ENCODE measurements at regions of chr20 and their contacts with region 1.

Region 1: GRCh38 chr20:13261460-13262301 is 40.6 kb downstream of the ISM1 start:
- DNase-seq: peak; percentile 63
- H3K4me3 Mint-ChIP-seq: no peak overlapping the region
- H3K27ac Mint-ChIP-seq: no peak overlapping the region
- H3K4me1 Mint-ChIP-seq: peaks cover 8% of the 10 kb centered on the region
- H3K27me3 Mint-ChIP-seq: no peaks in the 10 kb centered on the region
- CTCF ChIP-seq: peak; percentile 62

Region 2: GRCh38 chr20:13234961-13235360 is 26.7 kb before region 1 on chr20:
- CTCF ChIA-PET with region 1: no interaction called
- POLR2A ChIA-PET with region 1: no interaction called
- intact Hi-C with region 1: no loop called
- DNase-seq: no peak
- H3K4me3 Mint-ChIP-seq: no peak overlapping the region
- H3K27ac Mint-ChIP-seq: no peak overlapping the region
- H3K4me1 Mint-ChIP-seq: peaks cover 12% of the 10 kb centered on the region
- H3K27me3 Mint-ChIP-seq: no peaks in the 10 kb centered on the region
- CTCF ChIP-seq: no peak

Region 3: DNA sequence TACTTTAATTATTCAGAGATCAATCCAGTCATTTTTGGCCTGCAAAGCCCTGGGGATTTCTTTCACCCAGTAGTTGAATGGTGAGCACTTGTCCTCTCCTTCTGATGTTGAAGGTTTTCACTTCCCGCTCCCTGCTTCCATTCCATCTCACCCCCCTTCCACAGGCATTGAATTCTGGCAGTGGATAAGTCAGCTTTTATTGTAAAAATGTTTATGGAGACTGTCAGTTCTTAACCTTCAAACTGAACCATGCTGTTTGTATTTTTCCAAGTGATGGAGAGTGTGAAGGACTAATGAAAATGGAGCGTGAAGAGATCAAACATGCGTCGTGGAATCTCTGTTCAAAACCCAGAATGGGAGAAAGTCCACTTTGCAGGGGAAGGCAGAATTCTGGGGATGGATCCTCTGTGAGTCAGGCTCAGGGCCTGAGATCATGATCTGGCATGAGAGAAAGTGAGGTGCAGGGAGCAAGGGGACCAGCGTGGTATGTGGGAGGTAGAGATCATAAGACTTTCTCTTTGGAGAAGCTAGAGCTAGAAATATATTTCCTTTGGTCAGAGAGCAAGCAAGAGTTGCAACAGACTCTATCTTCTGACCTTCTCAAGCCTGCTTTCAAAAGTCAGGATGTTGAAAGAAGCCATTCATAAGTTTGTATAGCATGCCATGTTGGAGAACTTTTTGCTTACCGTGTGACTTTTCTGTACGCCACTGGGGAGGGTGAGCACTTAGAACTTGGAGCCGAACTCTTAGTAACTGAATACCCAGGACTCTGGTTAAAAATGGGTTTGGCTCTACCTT is 10.4 kb before region 1 on chr20:
- CTCF ChIA-PET with region 1: interaction called, 31 read pairs
- POLR2A ChIA-PET with region 1: interaction called, 4 read pairs
- intact Hi-C with region 1: no loop called
- DNase-seq: no peak
- H3K4me3 Mint-ChIP-seq: no peak overlapping the region
- H3K27ac Mint-ChIP-seq: no peak overlapping the region
- H3K4me1 Mint-ChIP-seq: peaks cover 13% of the 10 kb centered on the region
- H3K27me3 Mint-ChIP-seq: no peaks in the 10 kb centered on the region
- CTCF ChIP-seq: no peak

Region 4: DNA sequence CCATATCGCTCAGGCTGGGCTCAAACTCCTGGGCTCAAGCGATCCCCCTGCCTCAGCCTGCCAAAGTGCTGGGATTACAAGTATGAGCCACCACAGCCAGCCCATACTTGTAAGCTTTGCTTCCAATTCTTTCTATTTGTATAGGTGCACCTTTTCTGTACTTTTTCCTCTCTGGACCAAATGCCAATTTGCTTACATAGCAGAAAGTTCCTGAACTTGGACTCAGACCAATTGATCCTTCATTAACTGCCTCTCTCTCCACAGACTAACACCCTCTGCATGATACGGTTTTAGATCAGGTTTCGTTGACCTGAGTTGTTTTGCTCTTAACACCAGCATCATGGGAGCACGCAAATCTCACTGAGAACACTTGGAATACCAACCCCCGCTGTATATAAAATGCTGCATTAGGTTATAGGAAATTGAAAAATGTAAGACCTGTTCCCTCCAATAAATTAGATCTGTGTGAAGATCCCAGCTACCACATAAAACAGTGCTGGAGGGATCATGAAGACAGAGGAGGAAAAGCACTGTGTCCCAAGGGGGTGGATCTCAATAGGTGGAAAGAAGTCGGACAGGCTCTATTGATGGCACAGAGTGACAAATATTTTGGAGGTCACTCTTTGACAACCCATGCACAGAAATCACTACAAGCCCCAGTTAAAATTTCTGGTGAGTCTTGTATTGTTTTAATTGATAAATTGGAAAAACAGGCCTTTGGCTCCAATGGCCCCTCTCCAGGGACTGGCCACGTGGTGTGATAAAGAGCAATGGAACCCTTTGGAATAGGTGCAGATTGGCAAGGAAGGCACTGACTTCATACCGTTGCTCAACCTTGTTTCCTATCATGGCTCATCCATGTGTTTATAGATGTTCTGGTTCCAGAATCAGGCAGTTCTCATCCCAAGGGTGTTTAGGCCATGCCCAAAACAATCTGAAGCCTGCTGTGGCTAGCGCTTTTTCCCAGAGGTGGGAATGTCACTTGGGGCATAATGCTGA is 10.6 kb after region 1 on chr20:
- CTCF ChIA-PET with region 1: interaction called, 11 read pairs
- POLR2A ChIA-PET with region 1: interaction called, 6 read pairs
- intact Hi-C with region 1: no loop called
- DNase-seq: no peak
- H3K4me3 Mint-ChIP-seq: no peak overlapping the region
- H3K27ac Mint-ChIP-seq: peak overlapping the region; percentile 8
- H3K4me1 Mint-ChIP-seq: peaks cover 7% of the 10 kb centered on the region
- H3K27me3 Mint-ChIP-seq: no peaks in the 10 kb centered on the region
- CTCF ChIP-seq: no peak

Measured in MCF 10A (cell line).